Heart right ventricle (tissue), 16 donors: ENCODE measurements at regions of chr6 and their contacts with region 1.

Region 1: DNA sequence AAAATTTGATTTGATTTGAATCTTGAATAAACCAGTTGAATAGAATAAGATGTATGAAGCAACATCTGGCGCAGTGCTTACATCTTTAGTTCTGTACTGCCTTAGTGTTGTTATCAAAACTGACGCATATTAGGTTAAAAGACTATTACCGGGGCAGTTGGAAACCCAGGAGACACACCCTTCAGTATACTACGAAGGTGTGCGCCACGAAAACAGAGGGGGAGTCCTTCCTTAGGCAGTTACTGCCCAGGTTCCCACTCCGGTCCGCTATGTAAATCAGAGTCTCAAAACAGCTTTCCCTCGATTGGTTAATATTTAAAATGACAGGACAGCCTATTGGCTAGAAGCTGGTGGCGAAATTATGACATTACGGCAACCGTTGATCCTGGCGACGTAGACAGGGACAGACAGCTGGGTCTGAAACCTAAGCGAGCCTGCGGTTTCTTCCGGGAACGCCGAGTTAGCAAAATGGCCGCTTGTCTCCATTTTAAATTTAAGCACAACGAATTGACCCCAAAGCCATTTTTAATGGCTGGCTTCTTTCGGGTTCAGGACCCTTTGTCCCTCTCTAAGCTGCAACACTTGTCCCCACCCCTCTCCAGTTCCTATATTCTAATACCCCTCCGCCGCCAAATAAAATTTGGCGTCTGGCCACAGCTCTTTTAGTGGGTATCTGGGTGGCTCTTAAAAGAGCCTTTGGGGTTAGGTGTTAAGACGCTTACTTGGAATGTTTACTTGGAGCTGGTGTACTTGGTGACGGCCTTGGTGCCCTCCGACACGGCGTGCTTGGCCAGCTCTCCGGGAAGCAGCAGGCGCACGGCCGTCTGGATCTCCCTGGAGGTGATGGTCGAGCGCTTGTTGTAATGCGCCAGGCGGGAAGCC is 35.8 kb downstream of the HFE start:
- DNase-seq: peak; percentile 80 to 99
- ATAC-seq: peak; percentile 87 to 93 (median 90)
- H3K4me3 ChIP-seq: peak overlapping the region; percentile 65 to 95 (median 83)
- H3K27ac ChIP-seq: peak overlapping the region; percentile 89 to 98 (median 96)
- H3K4me1 ChIP-seq: peaks cover 0 to 26% (median 21%) of the 10 kb centered on the region in 9 donors
- H3K27me3 ChIP-seq: no peaks in the 10 kb centered on the region
- CTCF ChIP-seq: no peak

Region 2: GRCh38 chr6:26025894-26026832 is 96.9 kb before region 1 on chr6:
- intact Hi-C with region 1: loop called in 1 of 10 experiments (anchors 2 kb)
- DNase-seq: peak; percentile 90 to 96
- ATAC-seq: peak; percentile 65 to 83 (median 74)
- H3K4me3 ChIP-seq: peak overlapping the region; percentile 51 to 79 (median 68)
- H3K27ac ChIP-seq: peak overlapping the region; percentile 86 to 96 (median 91)
- H3K4me1 ChIP-seq: peaks cover 0 to 52% (median 10%) of the 10 kb centered on the region in 9 donors
- H3K27me3 ChIP-seq: no peaks in the 10 kb centered on the region
- CTCF ChIP-seq: peak; percentile 48 to 93 (median 83)

Region 3: GRCh38 chr6:26103770-26104456 is 19.1 kb before region 1 on chr6:
- intact Hi-C with region 1: loop called in 2 of 10 experiments (anchors 1 to 2 kb)
- DNase-seq: peak; percentile 83 to 90
- ATAC-seq: peak; percentile 89 to 96 (median 95)
- H3K4me3 ChIP-seq: peak overlapping the region; percentile 22 to 75 (median 60)
- H3K27ac ChIP-seq: peak overlapping the region; percentile 37 to 91 (median 80)
- H3K4me1 ChIP-seq: peaks cover 0 to 20% (median 10%) of the 10 kb centered on the region in 9 donors
- H3K27me3 ChIP-seq: no peaks in the 10 kb centered on the region
- CTCF ChIP-seq: peak in 8 of 9 donors; percentile 13 to 57 (median 40)

Region 4: DNA sequence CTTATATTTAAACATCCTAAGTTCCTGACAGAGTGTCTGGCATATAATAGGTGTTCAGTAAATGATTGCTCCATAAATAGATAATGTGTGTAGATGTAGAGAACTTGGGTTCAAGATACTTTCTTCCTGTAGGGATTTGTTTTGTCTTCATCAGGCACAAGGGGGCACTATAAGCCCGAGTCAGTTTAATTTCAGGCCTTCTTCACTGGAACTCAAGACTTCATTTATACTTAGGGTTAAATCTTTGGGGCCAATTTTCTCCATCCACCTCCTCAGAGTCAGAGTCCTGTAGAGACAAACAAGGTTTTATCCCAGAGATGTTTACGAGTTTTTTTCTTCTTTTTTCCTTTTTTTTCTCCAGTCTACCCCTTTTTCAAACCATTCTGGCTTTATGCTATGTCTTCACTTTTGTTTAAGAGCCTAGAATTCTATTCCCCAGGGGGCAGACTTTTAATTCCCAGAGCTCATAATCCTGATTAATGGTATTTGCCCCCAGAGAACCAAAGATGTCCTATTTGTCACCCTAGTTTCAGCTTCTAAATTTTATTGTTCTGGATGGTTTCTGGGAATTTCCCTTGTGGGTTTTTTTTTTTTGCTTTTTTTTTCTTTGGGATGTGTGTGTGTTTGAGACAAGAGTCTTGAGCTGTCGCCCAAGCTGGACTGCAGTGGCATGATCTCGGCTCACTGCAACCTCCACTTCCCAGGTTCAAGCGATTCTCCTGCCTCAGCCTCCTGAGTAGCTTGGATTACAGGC is 52.6 kb after region 1 on chr6:
- intact Hi-C with region 1: loop called in 1 of 10 experiments (anchors 1 kb)
- DNase-seq: peak in 1 of 2 donors; percentile 48
- ATAC-seq: no peak
- H3K4me3 ChIP-seq: no peak overlapping the region
- H3K27ac ChIP-seq: no peak overlapping the region
- H3K4me1 ChIP-seq: peaks cover 0 to 31% (median 9%) of the 10 kb centered on the region in 9 donors
- H3K27me3 ChIP-seq: no peaks in the 10 kb centered on the region
- CTCF ChIP-seq: peak; percentile 17 to 77 (median 63)

Region 5: DNA sequence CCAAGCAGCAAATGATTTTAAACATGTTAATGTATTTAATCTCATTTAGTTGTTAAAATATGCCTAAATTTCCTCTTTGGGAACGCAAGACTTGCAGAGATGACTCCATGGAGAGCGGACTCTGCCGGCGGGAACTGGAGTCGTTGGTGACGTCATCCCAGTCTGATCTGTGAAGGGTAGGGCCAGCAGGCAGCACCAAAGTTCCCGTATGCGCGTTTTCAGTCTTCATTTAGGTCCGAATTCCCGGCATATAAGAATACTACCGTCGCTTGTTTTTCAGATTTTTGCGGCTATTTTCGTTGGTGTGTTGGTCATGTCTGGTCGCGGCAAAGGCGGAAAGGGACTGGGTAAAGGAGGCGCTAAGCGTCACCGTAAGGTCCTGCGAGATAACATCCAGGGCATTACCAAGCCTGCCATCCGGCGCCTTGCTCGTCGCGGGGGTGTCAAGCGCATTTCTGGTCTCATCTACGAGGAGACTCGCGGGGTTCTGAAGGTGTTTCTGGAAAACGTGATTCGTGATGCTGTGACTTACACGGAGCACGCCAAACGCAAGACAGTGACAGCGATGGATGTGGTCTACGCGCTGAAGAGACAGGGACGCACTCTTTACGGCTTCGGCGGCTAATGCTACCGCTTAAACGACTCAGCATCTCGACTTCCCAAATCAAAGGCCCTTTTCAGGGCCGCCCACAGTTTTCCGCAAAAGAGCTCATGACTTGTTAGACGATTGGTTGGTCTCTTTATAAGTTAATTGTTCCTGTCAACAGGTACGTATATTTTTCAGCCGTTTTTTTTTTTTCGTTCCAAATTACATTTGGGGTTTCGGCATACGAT is 81.5 kb after region 1 on chr6:
- intact Hi-C with region 1: loop called in 4 of 10 experiments (anchors 2 to 10 kb)
- DNase-seq: peak; percentile 78 to 98
- ATAC-seq: peak; percentile 92 to 96 (median 94)
- H3K4me3 ChIP-seq: peak overlapping the region; percentile 50 to 82 (median 68)
- H3K27ac ChIP-seq: peak overlapping the region; percentile 85 to 95 (median 91)
- H3K4me1 ChIP-seq: peaks cover 0 to 56% (median 12%) of the 10 kb centered on the region in 9 donors
- H3K27me3 ChIP-seq: peaks cover 0 to 22% (median 0%) of the 10 kb centered on the region in 7 donors
- CTCF ChIP-seq: peak in 7 of 9 donors; percentile 24 to 68 (median 36)

Region 6: DNA sequence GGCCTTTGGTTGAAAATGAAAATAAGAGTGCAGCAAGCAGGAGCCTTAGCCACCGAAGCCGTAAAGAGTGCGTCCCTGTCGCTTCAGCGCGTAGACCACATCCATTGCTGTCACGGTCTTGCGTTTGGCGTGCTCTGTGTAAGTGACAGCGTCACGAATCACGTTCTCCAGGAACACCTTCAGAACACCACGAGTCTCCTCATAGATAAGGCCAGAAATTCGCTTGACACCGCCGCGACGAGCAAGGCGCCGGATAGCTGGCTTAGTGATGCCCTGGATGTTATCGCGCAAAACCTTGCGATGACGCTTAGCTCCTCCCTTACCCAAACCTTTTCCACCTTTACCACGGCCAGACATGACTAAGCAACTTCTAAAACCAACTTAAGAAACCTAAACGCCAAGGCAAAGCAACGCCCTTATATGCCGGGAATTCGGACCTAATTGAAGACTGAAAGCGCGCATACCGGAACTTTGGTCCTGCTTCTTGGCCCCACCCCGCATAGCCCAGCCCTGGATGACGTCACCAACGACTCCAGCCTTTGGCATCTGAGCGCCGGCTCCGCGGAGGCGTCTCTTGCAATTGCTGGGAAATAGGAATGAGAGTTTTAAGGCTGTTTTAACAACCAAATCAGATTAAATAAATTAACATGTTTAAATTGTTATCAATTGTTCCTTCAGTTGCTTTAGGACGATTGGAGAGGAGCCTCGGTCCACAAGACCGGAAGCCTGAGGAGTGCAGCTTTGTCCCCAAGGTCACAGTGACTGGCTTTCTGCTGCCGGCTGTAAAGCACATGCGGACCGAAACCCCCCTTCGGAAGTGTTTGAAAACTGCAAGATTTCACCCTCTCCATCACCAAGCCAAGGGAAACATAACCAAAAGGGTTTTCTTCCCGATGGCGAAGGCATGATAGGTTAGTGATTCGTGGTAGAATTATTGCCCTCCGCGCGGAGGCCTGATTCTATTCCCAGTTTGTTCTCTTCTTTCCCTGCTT is 162.4 kb after region 1 on chr6:
- intact Hi-C with region 1: loop called in 1 of 10 experiments (anchors 10 kb)
- DNase-seq: peak; percentile 92 to 99
- ATAC-seq: peak; percentile 93 to 97 (median 96)
- H3K4me3 ChIP-seq: peak overlapping the region; percentile 29 to 78 (median 65)
- H3K27ac ChIP-seq: peak overlapping the region; percentile 87 to 96 (median 92)
- H3K4me1 ChIP-seq: peaks cover 0 to 22% (median 14%) of the 10 kb centered on the region in 9 donors
- H3K27me3 ChIP-seq: no peaks in the 10 kb centered on the region
- CTCF ChIP-seq: no peak

Region 7: DNA sequence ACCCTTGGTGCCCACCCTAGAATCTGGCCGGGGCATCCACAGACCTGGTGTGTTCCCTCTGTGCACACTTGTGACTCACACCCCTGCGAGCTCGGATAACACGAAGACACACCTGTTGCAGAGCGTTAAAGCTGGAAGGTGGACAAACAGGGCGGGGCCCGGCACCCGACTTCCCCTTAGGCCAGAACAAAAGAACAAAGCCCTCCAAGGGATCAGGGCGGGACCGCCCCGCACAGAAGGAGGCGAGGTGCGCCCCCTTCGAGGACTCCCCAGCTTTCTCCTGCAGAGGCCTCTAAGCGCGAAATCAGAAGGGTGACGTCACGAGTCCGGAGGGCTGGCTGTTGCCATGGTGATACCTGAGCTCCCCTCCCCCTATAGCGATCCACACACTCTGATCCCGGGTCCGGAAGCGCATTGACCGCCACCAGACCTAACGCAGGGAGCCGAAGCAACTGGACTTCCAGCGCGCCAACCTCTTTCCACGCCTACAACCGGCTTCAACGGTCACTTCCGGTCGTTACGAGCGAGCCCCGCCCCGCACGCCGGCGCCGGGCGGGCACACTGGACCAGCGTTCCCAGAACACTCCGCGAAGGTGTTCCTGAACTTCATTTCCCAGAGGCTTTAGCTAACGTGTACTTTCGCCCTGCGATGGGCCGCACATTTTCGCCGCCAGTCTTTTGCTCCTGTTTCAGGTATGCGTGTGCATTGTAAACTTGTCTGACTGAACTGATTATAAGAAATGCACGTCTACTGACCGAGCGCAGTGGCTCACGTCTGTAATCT is 1349.8 kb after region 1 on chr6 and contains the start of gene ZNF184:
- intact Hi-C with region 1: loop called in 1 of 10 experiments (anchors 10 kb)
- DNase-seq: peak; percentile 95 to 96
- ATAC-seq: peak; percentile 99 to 100 (median 100)
- H3K4me3 ChIP-seq: peak within 1 kb of the TSS; percentile 51 to 97 (median 80)
- H3K27ac ChIP-seq: peak within 1 kb of the TSS in 9 of 10 donors; percentile 81 to 93 (median 90)
- H3K4me1 ChIP-seq: peaks cover under 1 to 31% (median 17%) of the 10 kb centered on the region in 9 donors
- H3K27me3 ChIP-seq: no peaks in the 10 kb centered on the region
- CTCF ChIP-seq: peak in 3 of 9 donors; percentile 7 to 30 (median 17)
- total RNA-seq, gene ZNF184: 2.1 to 5.5 (median 3.4) TPM